ENCODE measurements at regions of chr5 and their contacts with region 1.

Region 1: DNA sequence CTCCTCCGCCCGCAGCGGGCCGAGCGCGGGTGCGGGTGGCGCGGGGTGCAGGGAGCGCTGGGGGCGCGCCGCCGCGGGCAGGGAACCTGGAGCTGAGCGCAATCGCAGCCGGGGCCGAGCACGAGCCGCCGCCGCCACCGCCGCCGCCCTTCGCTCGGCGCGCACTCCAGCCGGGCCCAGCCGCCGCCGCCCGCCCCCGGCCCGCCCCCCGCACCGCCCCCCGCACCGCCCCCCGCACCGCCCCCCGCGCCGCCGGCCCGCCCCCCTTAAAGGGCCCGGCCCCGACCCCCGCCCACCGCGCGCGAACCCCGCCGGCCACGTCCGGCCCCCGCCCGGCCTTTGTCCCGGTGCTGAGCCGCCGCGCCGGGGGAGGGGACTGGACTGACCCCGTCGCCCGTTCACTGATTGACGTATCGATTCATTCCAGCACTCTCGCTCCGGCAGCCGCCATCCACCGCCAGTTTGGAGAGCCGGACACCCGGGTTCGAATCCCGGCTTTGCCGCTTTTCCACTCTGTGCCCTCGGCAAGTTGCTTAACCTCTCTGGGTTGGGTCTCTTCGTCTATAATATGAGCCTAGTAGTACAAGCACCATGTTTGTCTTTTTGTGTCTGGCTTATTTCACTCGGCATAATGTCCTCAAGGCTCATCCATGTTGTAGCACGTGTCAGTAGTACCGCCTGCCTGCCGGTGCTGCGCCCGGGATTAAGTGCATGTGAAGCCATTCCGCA is at the start of gene SH3PXD2B:
- DNase-seq: peak; percentile 66 to 71
- H3K4me3 ChIP-seq: peak within 1 kb of the TSS; percentile 71 to 96
- H3K27ac ChIP-seq: peak within 1 kb of the TSS; percentile 94 to 95
- H3K4me1 ChIP-seq: peaks cover 4 to 19% of the 10 kb centered on the region in 2 donors
- H3K27me3 ChIP-seq: no peaks in the 10 kb centered on the region
- CTCF ChIP-seq: peak in 1 of 4 experiments; percentile 24
- POLR2A ChIP-seq: peak; percentile 80 to 88
- total RNA-seq, gene SH3PXD2B: 26.1 to 82.6 (median 31.0) TPM

Region 2: DNA sequence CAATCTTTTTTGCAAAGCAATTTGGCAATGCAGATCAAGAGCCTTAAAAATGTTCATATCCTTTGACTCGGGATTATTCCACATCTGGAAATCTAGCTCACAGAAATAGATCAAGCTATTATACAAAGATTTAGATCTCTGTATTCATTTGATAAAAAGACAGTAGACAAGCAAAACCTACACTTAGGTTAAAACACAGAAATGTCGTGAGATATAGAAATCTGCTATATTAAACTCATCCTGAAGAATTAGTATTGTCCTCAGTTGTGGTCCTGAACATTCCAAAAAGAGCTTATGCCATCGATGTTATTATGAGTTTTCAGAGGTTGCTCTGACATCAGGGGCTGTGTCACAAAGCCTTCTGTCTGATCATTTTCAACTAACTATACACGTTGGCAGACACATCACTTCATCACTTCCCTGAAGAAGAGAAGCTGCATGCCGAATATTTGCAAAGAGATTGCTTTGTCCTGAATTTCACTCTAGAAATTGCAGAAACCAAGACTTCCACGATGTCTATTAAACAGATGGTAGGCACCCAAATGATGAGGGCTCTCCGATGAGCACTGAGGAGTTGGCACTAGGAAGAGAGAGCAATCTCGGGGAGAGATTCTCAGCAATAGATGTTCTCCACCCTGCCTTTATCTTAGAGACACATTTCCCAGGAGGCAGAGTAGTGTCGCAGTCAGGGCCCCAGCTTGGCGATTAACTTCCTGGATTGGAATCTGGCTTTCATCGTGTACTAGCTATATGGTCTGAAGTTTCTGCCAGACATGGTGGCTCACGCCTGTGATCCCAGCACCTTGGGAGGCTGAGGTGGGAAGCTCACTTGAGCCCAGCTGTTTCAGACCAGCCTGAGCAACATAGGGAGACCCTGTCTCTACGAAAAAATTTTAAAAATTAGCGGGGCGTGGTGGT is 169.0 kb before region 1 on chr5:
- intact Hi-C with region 1: loop called (anchors 5 kb)
- DNase-seq: no peak
- H3K4me3 ChIP-seq: peak overlapping the region in 1 of 2 donors; percentile 81
- H3K27ac ChIP-seq: peak overlapping the region in 1 of 2 donors; percentile 20
- H3K4me1 ChIP-seq: peaks cover 10 to 12% of the 10 kb centered on the region in 2 donors
- H3K27me3 ChIP-seq: no peaks in the 10 kb centered on the region
- CTCF ChIP-seq: no peak
- POLR2A ChIP-seq: no peak

Region 3: GRCh38 chr5:172417983-172418630 is 36.4 kb before region 1 on chr5:
- intact Hi-C with region 1: loop called (anchors 5 kb)
- DNase-seq: peak; percentile 96 to 99
- H3K4me3 ChIP-seq: no peak overlapping the region
- H3K27ac ChIP-seq: peak overlapping the region; percentile 93 to 95
- H3K4me1 ChIP-seq: peaks cover 34 to 51% of the 10 kb centered on the region in 2 donors
- H3K27me3 ChIP-seq: no peaks in the 10 kb centered on the region
- CTCF ChIP-seq: peak in 1 of 4 experiments; percentile 7
- POLR2A ChIP-seq: peak in 1 of 2 donors; percentile 19